Ascending aorta (tissue), 2 donors: ENCODE measurements at regions of chr6 and their contacts with region 1.

Region 1: GRCh38 chr6:99746261-99746895 is 139.7 kb downstream of the PRDM13 start:
- DNase-seq: peak in 1 of 2 donors; percentile 67
- H3K4me3 ChIP-seq: no peak overlapping the region
- H3K27ac ChIP-seq: no peak overlapping the region
- H3K4me1 ChIP-seq: no peaks in the 10 kb centered on the region
- H3K27me3 ChIP-seq: no peaks in the 10 kb centered on the region
- CTCF ChIP-seq: peak; percentile 47 to 82 (median 67)

Region 2: DNA sequence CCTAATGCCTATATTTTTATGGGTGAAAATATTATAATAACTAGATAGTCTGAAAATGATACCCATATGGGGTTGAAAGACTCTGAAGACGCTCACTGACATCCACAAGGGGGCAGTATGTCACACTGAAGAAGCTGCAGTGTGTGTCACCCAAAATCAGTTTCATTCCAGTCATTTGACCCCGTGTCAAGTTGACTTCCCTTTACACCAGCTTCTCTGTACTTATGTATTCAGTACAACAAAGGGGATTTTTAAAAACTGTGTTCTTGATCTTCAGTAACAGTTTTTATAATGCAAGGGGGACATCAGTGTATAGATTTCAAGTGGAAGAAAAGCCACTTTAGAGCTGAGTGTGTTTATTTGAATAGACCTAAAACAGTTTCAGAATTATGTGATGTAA is 416.2 kb before region 1 on chr6:
- intact Hi-C with region 1: loop called (anchors 10 kb)
- DNase-seq: no peak
- H3K4me3 ChIP-seq: no peak overlapping the region
- H3K27ac ChIP-seq: no peak overlapping the region
- H3K4me1 ChIP-seq: no peaks in the 10 kb centered on the region
- H3K27me3 ChIP-seq: no peaks in the 10 kb centered on the region
- CTCF ChIP-seq: peak; percentile 31 to 59 (median 58)

Region 3: GRCh38 chr6:99467509-99468106 is 278.8 kb before region 1 on chr6:
- intact Hi-C with region 1: loop called (anchors 1 kb)
- DNase-seq: no peak
- H3K4me3 ChIP-seq: no peak overlapping the region
- H3K27ac ChIP-seq: no peak overlapping the region
- H3K4me1 ChIP-seq: no peaks in the 10 kb centered on the region
- H3K27me3 ChIP-seq: no peaks in the 10 kb centered on the region
- CTCF ChIP-seq: peak in 2 of 3 experiments; percentile 52 to 59

Region 4: GRCh38 chr6:99588618-99589289 is 157.6 kb before region 1 on chr6:
- intact Hi-C with region 1: loop called (anchors 1 kb)
- DNase-seq: peak in 1 of 2 donors; percentile 78
- H3K4me3 ChIP-seq: peak overlapping the region; percentile 66 to 76
- H3K27ac ChIP-seq: no peak overlapping the region
- H3K4me1 ChIP-seq: peaks cover 2 to 14% of the 10 kb centered on the region in 2 donors
- H3K27me3 ChIP-seq: peaks cover 23% of the 10 kb centered on the region
- CTCF ChIP-seq: peak in 2 of 3 experiments; percentile 20 to 55